ENCODE measurements at regions of chr4 and their contacts with region 1.

Region 1: DNA sequence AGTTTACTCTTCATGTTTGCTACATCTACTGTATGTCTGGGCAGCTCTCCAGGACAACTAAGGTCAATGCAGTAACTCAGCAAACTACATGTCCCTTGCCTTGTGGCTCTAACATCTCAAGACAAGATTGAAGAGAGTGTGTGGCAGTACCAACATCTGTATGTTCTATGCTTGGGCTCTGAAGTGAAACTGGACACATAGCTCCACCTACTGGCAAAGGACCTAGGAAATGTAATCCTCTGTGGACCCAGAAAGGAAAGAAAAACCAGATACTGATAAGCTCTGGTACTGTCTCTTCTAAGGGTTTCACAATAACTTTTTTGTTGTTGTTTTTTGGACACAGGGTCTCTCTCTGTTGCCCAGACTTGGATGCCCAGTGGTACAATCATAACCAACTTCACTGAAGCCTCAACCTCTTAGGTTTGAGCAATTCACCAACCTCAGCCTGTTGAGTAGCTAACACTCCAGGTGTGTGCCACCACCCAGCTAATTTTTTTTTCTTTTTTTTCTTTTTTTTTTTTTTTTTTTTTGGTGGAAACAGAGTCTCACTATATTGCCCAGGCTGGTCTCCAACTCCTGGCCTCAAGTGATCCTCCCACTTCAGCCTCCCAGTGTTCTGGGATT is 64.1 kb downstream of the QDPR start:
- DNase-seq: peak; percentile 57 to 70
- H3K4me3 ChIP-seq: no peak overlapping the region
- H3K4me3 Mint-ChIP-seq: no peak overlapping the region
- H3K27ac Mint-ChIP-seq: no peak overlapping the region
- H3K4me1 ChIP-seq: no peaks in the 10 kb centered on the region
- H3K4me1 Mint-ChIP-seq: no peaks in the 10 kb centered on the region
- H3K27me3 ChIP-seq: no peaks in the 10 kb centered on the region
- H3K27me3 Mint-ChIP-seq: peaks cover 18% of the 10 kb centered on the region
- CTCF ChIP-seq: peak; percentile 58 to 76

Region 2: DNA sequence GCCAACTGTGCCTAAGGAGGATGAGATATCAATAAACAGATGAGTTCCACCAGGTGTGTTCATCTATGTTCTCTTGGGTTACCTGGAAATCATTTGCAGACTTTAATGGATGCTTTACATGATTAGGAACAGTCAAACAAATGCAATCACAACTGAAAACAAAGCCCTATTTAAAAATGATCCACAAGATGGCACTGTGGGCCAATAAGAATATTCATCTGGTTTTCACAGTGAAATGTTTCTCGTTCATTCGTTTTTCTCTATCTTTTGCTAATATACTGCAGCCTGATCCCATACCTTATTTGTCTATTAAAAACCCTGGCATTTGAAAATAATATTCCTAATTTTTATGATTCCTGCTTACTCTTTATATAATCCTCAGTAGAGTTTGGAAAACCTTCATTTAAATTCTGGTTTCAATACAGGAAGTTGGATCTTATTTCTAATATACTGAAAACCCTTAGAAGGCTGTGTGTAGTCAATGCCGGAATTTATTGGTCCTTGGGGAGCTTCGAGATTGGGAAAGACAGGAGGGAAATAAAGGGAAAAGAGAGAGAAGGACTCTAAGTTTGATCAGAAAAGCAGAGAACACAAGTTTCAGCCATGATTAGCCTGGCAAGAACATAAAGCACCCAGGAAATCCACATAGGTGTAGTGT is 1157.8 kb before region 1 on chr4:
- CTCF ChIA-PET with region 1: no interaction called
- POLR2A ChIA-PET with region 1: no interaction called
- intact Hi-C with region 1: loop called (anchors 2 kb)
- DNase-seq: peak in 1 of 2 experiments; percentile 29
- H3K4me3 ChIP-seq: no peak overlapping the region
- H3K4me3 Mint-ChIP-seq: no peak overlapping the region
- H3K27ac Mint-ChIP-seq: no peak overlapping the region
- H3K4me1 ChIP-seq: no peaks in the 10 kb centered on the region
- H3K4me1 Mint-ChIP-seq: no peaks in the 10 kb centered on the region
- H3K27me3 ChIP-seq: no peaks in the 10 kb centered on the region
- H3K27me3 Mint-ChIP-seq: peaks cover 9% of the 10 kb centered on the region
- CTCF ChIP-seq: peak; percentile 40 to 45

Region 3: DNA sequence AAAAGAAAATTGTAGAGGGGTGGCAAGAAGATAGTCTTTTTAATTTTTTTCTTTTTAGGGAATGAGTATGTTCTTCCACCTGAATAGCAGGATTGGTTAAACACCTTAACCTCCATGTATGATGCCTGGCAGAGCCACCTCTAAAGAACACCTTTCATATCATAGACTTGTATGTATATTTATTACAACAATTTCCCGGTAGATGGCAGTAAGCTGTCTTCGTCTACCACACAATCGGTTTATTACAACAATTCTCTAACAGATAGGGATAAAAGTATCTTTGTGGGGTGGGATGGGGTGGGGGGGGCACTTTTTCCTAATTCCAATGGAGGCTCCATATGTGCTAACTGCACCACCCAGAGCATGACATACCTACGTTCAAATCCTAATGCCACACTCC is 804.9 kb before region 1 on chr4:
- CTCF ChIA-PET with region 1: no interaction called
- POLR2A ChIA-PET with region 1: no interaction called
- intact Hi-C with region 1: loop called (anchors 1 kb)
- DNase-seq: peak in 1 of 2 experiments; percentile 6
- H3K4me3 ChIP-seq: no peak overlapping the region
- H3K4me3 Mint-ChIP-seq: no peak overlapping the region
- H3K27ac Mint-ChIP-seq: no peak overlapping the region
- H3K4me1 ChIP-seq: no peaks in the 10 kb centered on the region
- H3K4me1 Mint-ChIP-seq: no peaks in the 10 kb centered on the region
- H3K27me3 ChIP-seq: no peaks in the 10 kb centered on the region; the same call in 1 of the 2 replicates
- H3K27me3 Mint-ChIP-seq: peaks cover 7% of the 10 kb centered on the region
- CTCF ChIP-seq: peak; percentile 10 to 20

Region 4: DNA sequence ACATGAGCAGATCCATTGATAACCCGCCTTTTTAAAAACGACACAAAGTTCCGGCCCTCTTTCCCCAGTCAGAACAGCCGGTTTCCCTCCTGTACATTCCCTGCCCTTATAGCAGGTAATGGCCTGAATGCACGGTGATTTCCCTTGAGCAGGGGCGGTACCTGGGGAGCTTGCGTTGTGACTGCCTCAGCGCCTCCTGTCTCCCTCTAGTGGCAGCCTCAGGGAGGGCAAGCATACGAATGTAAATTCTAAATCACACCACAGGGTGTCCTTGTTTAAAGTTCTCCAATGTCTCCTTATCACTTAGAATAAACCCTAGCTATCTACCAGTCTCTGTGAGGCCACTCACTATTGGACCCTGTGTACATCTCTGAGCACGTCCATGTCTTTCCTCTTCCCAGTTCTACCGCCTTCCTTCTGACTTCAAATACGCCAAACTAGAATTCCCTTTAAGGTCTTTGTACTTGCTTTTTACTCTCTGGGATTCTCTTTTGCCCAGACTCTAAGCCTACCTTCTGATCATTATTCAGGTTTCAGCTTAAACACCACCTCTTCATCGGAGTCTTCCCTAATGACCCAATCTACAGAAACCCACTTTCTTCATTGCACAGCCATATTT is 531.0 kb before region 1 on chr4:
- CTCF ChIA-PET with region 1: interaction called, 5 read pairs
- POLR2A ChIA-PET with region 1: no interaction called
- intact Hi-C with region 1: loop called (anchors 2 kb)
- DNase-seq: peak; percentile 62 to 72
- H3K4me3 ChIP-seq: no peak overlapping the region
- H3K4me3 Mint-ChIP-seq: no peak overlapping the region
- H3K27ac Mint-ChIP-seq: no peak overlapping the region
- H3K4me1 ChIP-seq: no peaks in the 10 kb centered on the region
- H3K4me1 Mint-ChIP-seq: no peaks in the 10 kb centered on the region
- H3K27me3 ChIP-seq: no peaks in the 10 kb centered on the region
- H3K27me3 Mint-ChIP-seq: no peaks in the 10 kb centered on the region
- CTCF ChIP-seq: peak; percentile 78 to 79

Region 5: DNA sequence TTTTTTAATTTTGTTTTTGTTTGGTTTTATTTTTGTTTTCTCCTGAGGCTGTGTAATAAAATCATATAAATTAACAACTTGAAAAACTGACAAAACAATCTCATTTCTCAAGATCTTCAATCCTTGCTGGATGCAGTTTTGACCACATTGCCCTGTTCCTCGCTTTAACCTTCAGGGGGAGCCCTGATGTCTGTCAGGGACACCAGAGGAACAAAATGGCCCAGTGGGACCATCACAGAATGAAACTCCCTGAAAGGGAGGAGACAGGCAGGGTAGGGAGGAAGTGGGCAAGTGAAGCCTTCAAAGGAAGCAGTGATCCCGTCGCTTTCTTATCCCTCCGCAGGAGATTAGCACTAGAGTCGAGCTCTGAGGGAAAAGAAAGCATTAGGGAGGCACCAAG is 274.5 kb before region 1 on chr4:
- CTCF ChIA-PET with region 1: interaction called, 3 read pairs
- POLR2A ChIA-PET with region 1: no interaction called
- intact Hi-C with region 1: loop called (anchors 2 kb)
- DNase-seq: peak in 1 of 2 experiments; percentile 6
- H3K4me3 ChIP-seq: no peak overlapping the region
- H3K4me3 Mint-ChIP-seq: no peak overlapping the region
- H3K27ac Mint-ChIP-seq: no peak overlapping the region
- H3K4me1 ChIP-seq: no peaks in the 10 kb centered on the region
- H3K4me1 Mint-ChIP-seq: no peaks in the 10 kb centered on the region
- H3K27me3 ChIP-seq: no peaks in the 10 kb centered on the region; the same call in 1 of the 2 replicates
- H3K27me3 Mint-ChIP-seq: peaks cover 2% of the 10 kb centered on the region
- CTCF ChIP-seq: no peak

Region 6: GRCh38 chr4:17347445-17347844 is 100.3 kb before region 1 on chr4:
- CTCF ChIA-PET with region 1: interaction called, 10 read pairs
- POLR2A ChIA-PET with region 1: no interaction called
- intact Hi-C with region 1: loop called (anchors 1 kb)
- DNase-seq: peak in 1 of 2 experiments; percentile 38
- H3K4me3 ChIP-seq: no peak overlapping the region
- H3K4me3 Mint-ChIP-seq: no peak overlapping the region
- H3K27ac Mint-ChIP-seq: no peak overlapping the region
- H3K4me1 ChIP-seq: no peaks in the 10 kb centered on the region
- H3K4me1 Mint-ChIP-seq: no peaks in the 10 kb centered on the region
- H3K27me3 ChIP-seq: no peaks in the 10 kb centered on the region
- H3K27me3 Mint-ChIP-seq: no peaks in the 10 kb centered on the region
- CTCF ChIP-seq: peak; percentile 35 to 45

Region 7: DNA sequence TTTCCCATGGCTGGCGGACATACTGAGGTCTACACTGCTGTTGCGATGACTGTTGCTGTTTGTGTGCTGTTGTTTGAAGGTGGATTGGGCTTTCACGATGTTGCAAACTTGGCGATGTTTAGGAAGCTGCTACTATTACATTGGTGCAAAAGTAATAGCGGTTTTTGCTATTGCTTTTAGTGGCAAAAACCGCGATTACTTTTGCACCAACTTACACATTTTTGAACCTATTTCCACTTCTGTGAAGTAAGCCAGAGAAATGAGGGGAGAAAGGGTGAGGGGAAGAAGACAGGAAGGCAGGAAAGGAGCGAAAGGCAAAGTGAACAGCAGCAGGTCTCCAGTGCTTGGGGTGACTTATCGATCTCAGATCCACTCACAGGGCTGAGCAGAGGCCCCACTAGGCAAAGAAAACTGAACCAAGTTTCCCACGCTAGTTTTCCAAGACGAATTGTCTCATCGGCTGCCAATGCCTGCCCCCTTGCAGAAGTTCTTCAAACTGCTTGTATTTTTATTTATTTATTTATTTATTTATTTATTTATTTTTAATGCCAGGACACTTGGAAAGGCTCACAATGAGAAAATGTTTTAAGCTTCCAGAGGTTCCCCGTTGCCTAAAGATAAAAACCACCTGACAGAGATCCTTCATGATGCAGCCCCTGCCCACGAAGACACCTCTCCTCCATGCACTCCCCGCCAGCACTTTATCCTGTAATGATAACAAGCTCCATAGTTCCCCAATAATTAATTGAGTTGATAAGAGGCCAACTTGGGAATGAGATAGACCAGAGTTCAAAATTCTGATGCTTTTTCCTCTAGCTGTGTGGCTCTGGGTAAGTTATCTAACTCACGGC is 20.8 kb after region 1 on chr4:
- CTCF ChIA-PET with region 1: interaction called, 11 read pairs
- POLR2A ChIA-PET with region 1: no interaction called
- intact Hi-C with region 1: no loop called
- DNase-seq: peak in 1 of 2 experiments; percentile 14
- H3K4me3 ChIP-seq: no peak overlapping the region
- H3K4me3 Mint-ChIP-seq: no peak overlapping the region
- H3K27ac Mint-ChIP-seq: no peak overlapping the region
- H3K4me1 ChIP-seq: no peaks in the 10 kb centered on the region
- H3K4me1 Mint-ChIP-seq: no peaks in the 10 kb centered on the region
- H3K27me3 ChIP-seq: no peaks in the 10 kb centered on the region
- H3K27me3 Mint-ChIP-seq: peaks cover 2% of the 10 kb centered on the region
- CTCF ChIP-seq: peak in 1 of 2 experiments; percentile 50